ENCODE measurements at regions of chr12 and their contacts with region 1.

Region 1: GRCh38 chr12:89352492-89353187 is at the start of gene DUSP6:
- DNase-seq: peak; percentile 95 to 98
- H3K4me3 ChIP-seq: peak within 1 kb of the TSS; percentile 84
- H3K4me3 Mint-ChIP-seq: peak within 1 kb of the TSS; percentile 80
- H3K27ac Mint-ChIP-seq: peak within 1 kb of the TSS; percentile 98
- H3K4me1 ChIP-seq: peaks cover 25% of the 10 kb centered on the region
- H3K4me1 Mint-ChIP-seq: peaks cover 21% of the 10 kb centered on the region
- H3K27me3 ChIP-seq: no peaks in the 10 kb centered on the region
- H3K27me3 Mint-ChIP-seq: no peaks in the 10 kb centered on the region
- CTCF ChIP-seq: no peak
- total RNA-seq, gene DUSP6: 22.4 and 30.8 TPM in 2 replicates

Region 2: DNA sequence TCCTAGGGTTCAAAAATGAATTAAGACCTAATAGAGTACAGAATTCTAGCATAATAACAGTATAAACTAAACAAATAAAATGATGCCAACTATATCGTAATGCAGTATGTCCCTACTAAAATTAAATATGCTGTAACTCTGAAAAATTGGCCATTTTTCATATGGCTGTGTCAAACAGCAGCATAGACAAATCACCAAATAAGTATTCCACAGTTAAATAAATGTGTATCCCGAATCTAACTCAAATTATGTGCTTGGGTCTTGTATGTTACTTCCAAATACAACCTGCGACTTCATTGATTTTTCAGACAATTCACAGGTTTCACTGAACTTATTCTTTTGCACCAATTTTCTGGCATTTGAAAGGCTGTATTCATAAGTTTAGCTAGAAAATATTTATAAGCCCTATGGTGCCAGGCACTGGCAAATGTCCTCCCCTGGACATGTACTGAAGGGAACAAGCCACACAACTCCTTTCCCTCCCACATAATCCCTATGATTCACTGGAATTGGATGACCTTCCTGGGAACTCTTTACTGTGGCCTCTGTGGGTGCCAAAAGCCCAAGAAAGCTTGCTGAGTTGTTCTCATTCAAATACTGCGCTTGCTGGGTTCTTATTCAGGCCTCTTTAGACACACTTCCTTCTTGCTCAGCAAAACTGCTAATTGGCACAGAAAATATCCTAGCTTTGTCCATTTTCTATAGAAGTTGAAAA is 881.2 kb before region 1 on chr12:
- CTCF ChIA-PET with region 1: no interaction called
- POLR2A ChIA-PET with region 1: no interaction called
- intact Hi-C with region 1: no loop called
- DNase-seq: no peak
- H3K4me3 ChIP-seq: no peak overlapping the region
- H3K4me3 Mint-ChIP-seq: no peak overlapping the region
- H3K27ac Mint-ChIP-seq: no peak overlapping the region
- H3K4me1 ChIP-seq: no peaks in the 10 kb centered on the region
- H3K4me1 Mint-ChIP-seq: no peaks in the 10 kb centered on the region
- H3K27me3 ChIP-seq: no peaks in the 10 kb centered on the region
- H3K27me3 Mint-ChIP-seq: no peaks in the 10 kb centered on the region
- CTCF ChIP-seq: no peak

Region 3: DNA sequence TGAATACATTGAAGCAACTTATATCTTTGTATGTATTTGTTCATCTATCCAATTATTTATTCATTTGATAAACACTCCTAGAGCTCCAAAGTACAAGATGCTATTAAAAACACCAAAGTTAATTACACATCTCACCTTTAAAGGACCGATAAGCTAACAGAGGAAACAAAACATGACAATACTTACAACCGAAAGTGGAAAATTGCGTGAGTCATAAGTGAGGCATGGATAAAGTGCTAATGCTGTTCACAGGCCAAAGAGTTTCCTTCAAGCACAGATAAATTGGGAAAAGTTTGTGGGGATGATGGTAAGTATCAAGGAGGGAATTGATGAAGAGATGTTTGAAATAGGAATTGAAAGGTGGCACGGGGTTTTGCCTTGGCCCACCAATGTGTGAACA is 599.6 kb before region 1 on chr12:
- CTCF ChIA-PET with region 1: no interaction called
- POLR2A ChIA-PET with region 1: no interaction called
- intact Hi-C with region 1: no loop called
- DNase-seq: no peak
- H3K4me3 ChIP-seq: no peak overlapping the region
- H3K4me3 Mint-ChIP-seq: no peak overlapping the region
- H3K27ac Mint-ChIP-seq: peak overlapping the region; percentile 9
- H3K4me1 ChIP-seq: peaks cover 48% of the 10 kb centered on the region
- H3K4me1 Mint-ChIP-seq: peaks cover 34% of the 10 kb centered on the region
- H3K27me3 ChIP-seq: no peaks in the 10 kb centered on the region
- H3K27me3 Mint-ChIP-seq: no peaks in the 10 kb centered on the region
- CTCF ChIP-seq: no peak

Region 4: GRCh38 chr12:89019408-89020120 is 333.1 kb before region 1 on chr12:
- CTCF ChIA-PET with region 1: no interaction called
- POLR2A ChIA-PET with region 1: no interaction called
- intact Hi-C with region 1: loop called (anchors 1 kb)
- DNase-seq: peak; percentile 80 to 82
- H3K4me3 ChIP-seq: peak overlapping the region; percentile 36
- H3K4me3 Mint-ChIP-seq: no peak overlapping the region
- H3K27ac Mint-ChIP-seq: no peak overlapping the region
- H3K4me1 ChIP-seq: peaks cover 11% of the 10 kb centered on the region
- H3K4me1 Mint-ChIP-seq: peaks cover 10% of the 10 kb centered on the region
- H3K27me3 ChIP-seq: no peaks in the 10 kb centered on the region
- H3K27me3 Mint-ChIP-seq: no peaks in the 10 kb centered on the region
- CTCF ChIP-seq: peak; percentile 83 to 85

Region 5: DNA sequence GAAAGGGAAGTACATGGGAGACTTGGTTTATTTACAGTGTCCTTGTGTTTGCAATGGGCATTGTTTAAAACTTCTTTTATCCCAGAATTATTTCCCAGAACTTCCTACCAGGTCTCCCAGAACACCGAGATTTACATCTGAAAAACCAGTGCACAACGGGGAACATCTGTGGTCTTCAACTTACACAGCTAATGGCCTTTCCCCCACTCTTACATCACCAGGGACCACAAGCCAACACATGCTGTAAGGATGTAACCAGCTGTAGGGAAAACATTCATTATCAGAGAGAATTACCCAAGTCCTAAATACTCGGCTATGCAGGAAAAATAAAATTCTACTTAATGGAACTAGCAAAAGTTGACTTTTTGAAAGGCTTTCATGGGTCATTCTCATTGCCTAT is 267.9 kb before region 1 on chr12:
- CTCF ChIA-PET with region 1: no interaction called
- POLR2A ChIA-PET with region 1: no interaction called
- intact Hi-C with region 1: loop called (anchors 1 kb)
- DNase-seq: no peak
- H3K4me3 ChIP-seq: no peak overlapping the region
- H3K4me3 Mint-ChIP-seq: no peak overlapping the region
- H3K27ac Mint-ChIP-seq: no peak overlapping the region
- H3K4me1 ChIP-seq: peaks cover 38% of the 10 kb centered on the region
- H3K4me1 Mint-ChIP-seq: peaks cover 22% of the 10 kb centered on the region
- H3K27me3 ChIP-seq: no peaks in the 10 kb centered on the region
- H3K27me3 Mint-ChIP-seq: no peaks in the 10 kb centered on the region
- CTCF ChIP-seq: no peak

Region 6: GRCh38 chr12:89376202-89376529 is 23.5 kb after region 1 on chr12:
- CTCF ChIA-PET with region 1: interaction called, 14 read pairs
- POLR2A ChIA-PET with region 1: interaction called, 82 read pairs
- intact Hi-C with region 1: loop called (anchors 1 kb)
- DNase-seq: no peak
- H3K4me3 ChIP-seq: no peak overlapping the region
- H3K4me3 Mint-ChIP-seq: no peak overlapping the region
- H3K27ac Mint-ChIP-seq: peak overlapping the region; percentile 89
- H3K4me1 ChIP-seq: peaks cover 85% of the 10 kb centered on the region
- H3K4me1 Mint-ChIP-seq: peaks cover 30% of the 10 kb centered on the region
- H3K27me3 ChIP-seq: no peaks in the 10 kb centered on the region
- H3K27me3 Mint-ChIP-seq: no peaks in the 10 kb centered on the region
- CTCF ChIP-seq: no peak

Region 7: GRCh38 chr12:89421092-89421835 is 68.6 kb after region 1 on chr12:
- CTCF ChIA-PET with region 1: no interaction called
- POLR2A ChIA-PET with region 1: no interaction called
- intact Hi-C with region 1: loop called (anchors 2 kb)
- DNase-seq: no peak
- H3K4me3 ChIP-seq: no peak overlapping the region
- H3K4me3 Mint-ChIP-seq: no peak overlapping the region
- H3K27ac Mint-ChIP-seq: no peak overlapping the region
- H3K4me1 ChIP-seq: 0 out of 2 replicates have a peak, but pooled peaks cover 2% of the 10 kb centered on the region
- H3K4me1 Mint-ChIP-seq: peaks cover 2% of the 10 kb centered on the region
- H3K27me3 ChIP-seq: no peaks in the 10 kb centered on the region
- H3K27me3 Mint-ChIP-seq: no peaks in the 10 kb centered on the region
- CTCF ChIP-seq: peak; percentile 52 to 56

Region 8: DNA sequence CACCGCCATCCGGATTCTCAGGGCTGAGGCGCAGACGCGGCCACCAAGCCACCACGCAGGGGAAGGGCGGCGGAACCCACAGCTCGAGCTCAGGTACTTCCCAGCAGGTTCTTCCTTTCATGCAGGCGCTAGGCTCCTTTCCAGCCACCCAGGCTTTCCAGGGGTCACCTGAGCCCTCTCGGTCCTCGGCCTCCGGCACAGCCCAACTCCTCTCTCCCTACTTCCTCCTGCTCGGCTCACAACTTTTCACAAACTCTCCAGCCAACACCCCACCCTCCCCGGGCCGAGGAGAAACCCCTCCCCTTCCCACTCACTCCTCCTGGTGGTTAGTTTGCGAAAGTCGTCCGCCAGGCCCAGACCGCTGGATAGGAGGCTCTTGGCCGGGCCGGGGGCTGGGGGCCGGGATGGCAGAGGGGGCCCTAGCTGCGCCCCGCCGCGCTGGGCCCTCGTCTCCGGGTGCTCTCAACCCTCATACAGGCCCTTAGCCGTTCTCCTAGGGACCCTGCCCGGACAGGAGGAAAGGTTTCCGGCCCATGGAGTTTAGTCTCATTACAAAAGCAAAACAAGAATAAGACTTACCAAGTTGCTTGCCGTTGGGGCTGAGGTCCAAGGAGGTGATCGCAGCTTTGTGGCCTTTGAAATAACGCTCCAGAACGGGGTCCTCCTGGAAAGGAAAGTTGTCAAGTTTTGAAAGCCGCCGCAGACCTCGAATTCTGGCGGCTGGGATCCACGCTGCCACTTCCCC is 172.1 kb after region 1 on chr12 and contains the start of gene GALNT4:
- CTCF ChIA-PET with region 1: no interaction called
- POLR2A ChIA-PET with region 1: no interaction called
- intact Hi-C with region 1: loop called (anchors 1 kb)
- DNase-seq: peak; percentile 90 to 91
- H3K4me3 ChIP-seq: peak within 1 kb of the TSS; percentile 54
- H3K4me3 Mint-ChIP-seq: peak within 1 kb of the TSS; percentile 99
- H3K27ac Mint-ChIP-seq: peak within 1 kb of the TSS; percentile 96
- H3K4me1 ChIP-seq: peaks cover 19% of the 10 kb centered on the region; the same call in 1 of the 2 replicates
- H3K4me1 Mint-ChIP-seq: peaks cover 4% of the 10 kb centered on the region
- H3K27me3 ChIP-seq: no peaks in the 10 kb centered on the region
- H3K27me3 Mint-ChIP-seq: no peaks in the 10 kb centered on the region
- CTCF ChIP-seq: peak; percentile 75 to 81
- total RNA-seq, gene GALNT4: 6.6 and 7.2 TPM in 2 replicates

Measured in Caco-2 (cell line).